Endothelial cell of umbilical vein (primary cell): ENCODE measurements at regions of chr9 and their contacts with region 1.

Region 1: GRCh38 chr9:68685770-68686169 is 19.3 kb upstream of the PIP5K1B start:
- DNase-seq: peak; percentile 39
- H3K4me3 ChIP-seq: no peak overlapping the region
- H3K27ac ChIP-seq: no peak overlapping the region
- H3K4me1 ChIP-seq: no peaks in the 10 kb centered on the region
- H3K27me3 ChIP-seq: peaks cover 2% of the 10 kb centered on the region in 2 experiments
- CTCF ChIP-seq: peak; percentile 36 to 48
- POLR2A ChIP-seq: no peak

Region 2: DNA sequence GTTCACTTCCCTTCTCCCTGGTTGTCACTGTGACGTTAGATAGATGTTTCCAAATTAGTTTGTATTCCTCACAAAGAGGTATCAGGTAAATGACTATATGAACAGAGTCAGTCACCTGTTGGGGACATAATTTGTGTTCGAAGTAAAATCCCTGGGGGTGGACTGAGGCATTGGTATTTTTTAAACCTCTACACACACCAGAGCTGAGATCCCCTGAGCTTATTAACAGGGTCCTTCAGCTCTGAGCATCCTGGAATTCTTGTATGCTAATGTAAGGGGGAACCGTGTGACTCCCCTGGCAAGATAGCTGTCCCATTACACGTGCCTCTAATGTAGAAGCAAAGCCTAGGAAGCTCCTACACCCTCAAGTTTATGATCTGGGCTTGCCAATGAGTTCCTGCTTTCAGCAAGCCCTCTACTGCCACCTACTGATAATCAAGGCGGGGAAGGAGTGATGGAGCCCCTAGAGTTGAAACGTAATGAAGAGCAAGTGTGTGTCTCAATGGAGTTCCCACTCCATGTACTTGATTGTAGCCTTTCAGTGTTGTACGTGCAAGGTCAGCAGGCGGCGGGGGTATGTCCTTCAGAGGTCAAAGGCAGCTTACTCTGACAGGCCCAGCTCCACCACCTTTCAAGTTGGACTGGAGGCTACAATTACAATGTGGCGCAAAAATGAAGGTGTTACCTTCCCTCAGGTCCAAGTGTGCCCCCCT is 313.8 kb after region 1 on chr9:
- CTCF ChIA-PET with region 1: no interaction called
- POLR2A ChIA-PET with region 1: no interaction called
- dilution Hi-C with region 1: no loop called
- intact Hi-C with region 1: loop called (anchors 1 kb)
- DNase-seq: peak; percentile 67
- H3K4me3 ChIP-seq: no peak overlapping the region
- H3K27ac ChIP-seq: no peak overlapping the region
- H3K4me1 ChIP-seq: no peaks in the 10 kb centered on the region
- H3K27me3 ChIP-seq: peaks cover 2 to 8% of the 10 kb centered on the region in 2 experiments
- CTCF ChIP-seq: peak; percentile 71 to 77
- POLR2A ChIP-seq: no peak